BJ (cell line): ENCODE measurements at regions of chr21 and their contacts with region 1.

Region 1: DNA sequence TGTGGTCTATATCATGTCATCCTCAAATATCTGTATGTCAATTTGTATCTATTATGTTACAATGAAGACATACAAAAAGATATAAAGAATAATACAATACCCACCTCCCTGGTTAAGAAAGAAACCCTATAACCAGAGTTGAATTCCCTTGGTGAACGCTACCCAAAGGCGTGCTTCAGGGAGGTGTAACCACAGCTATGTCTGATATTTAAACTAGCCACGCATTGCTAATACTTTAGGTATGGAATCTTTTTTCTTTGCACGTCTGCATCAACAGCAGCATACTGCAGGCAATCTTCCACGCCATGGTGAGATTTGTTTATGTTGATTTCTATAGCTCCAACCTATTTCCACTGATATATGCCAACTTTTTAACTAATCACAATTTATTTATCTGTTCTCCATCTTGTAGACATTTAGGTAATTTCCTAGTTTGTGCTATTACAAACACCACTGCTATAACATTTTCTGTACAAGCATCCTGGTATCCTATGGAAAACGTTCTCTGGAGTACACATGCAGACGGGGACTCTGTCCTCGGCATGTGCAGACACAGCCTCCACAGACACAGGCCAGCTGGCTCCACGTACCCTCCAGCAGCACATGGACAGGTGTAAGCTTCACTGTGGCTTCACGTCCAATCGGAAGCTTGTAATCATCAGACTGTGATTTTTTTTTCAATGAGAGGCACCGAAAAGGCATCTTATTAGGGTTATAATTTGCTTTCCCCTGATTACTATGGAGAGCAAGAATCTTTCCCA is 58.5 kb downstream of the HSF2BP start:
- DNase-seq: peak; percentile 73
- H3K4me3 ChIP-seq: no peak overlapping the region
- H3K27me3 ChIP-seq: no peaks in the 10 kb centered on the region
- CTCF ChIP-seq: no peak

Region 2: DNA sequence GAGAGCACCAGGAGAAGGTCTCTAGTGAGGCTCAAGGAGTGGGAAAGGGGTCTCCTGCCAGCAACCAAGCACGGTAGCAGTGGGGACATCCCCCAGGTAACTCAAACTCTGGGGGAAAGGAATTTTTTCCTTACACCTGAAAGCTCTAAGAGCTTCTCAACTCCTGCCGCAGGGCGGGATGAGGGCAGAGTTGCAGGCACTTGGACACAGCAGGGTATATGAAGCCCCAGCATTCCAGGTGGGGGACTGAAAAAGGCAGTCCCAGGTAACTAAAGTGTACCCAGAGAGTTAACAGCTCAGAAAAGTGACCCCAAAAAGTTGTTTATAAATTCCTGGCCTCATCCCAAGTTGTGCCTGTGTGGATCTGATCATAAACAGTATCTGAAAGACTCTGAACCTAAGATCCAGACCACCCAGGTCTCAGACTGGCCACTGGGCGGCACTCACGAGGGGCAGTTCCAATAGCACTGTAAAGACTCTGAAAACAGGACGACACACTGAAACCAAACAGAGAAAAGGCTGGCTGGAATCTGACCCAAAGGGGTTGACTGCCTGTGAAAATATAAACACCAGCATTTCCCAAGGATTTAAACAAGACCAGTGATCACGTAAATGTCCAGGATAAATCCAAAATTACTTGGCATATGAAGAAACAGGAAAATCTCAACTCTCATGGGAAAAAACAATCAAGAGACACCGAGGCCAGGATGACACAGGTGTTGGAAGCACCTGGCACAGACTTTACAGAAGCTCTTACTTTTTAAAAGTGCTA is 11.0 kb after region 1 on chr21:
- CTCF ChIA-PET with region 1: interaction called, 10 read pairs
- POLR2A ChIA-PET with region 1: interaction called, 4 read pairs
- DNase-seq: no peak
- H3K4me3 ChIP-seq: no peak overlapping the region
- H3K27me3 ChIP-seq: no peaks in the 10 kb centered on the region
- CTCF ChIP-seq: peak; percentile 80

Region 3: DNA sequence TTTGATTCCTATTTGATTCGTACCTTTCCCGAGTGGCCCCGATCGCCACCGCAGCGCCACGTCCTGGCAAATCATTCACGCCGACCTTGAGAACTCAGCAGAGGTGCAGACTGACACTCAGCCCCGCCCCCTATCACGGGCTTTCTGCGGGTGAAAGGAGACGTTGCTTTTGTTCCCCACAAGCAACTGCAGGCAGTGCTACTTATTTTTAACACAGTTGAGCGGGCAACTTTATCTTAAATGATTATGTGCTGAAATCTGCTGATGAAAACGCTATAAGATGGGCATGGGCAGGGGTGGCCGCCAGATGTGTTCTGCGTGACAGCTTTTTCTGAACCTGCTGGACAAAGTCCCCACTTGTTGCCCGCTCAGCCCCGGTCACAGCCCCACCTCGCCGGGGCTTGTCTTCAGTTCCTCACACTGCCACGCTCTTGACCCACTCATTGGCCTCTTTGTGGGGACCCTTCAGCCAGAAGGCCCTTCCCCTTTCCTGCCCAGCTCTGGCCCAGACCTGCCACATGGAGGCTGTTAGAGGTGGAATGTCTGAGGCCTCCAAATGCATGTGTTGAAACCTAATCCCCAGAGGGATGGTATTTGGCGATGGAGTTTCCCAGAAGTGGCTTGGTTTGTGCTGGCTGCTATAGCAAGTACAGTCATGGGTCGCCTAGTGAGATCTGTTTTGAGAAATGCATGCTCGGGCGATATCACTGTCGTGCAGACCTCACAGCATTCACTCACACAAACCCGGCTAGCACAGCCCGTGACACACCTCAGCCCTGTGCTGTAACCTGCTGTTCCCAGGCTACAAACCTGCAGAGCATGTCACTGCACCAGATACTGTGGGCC is 102.4 kb after region 1 on chr21:
- CTCF ChIA-PET with region 1: no interaction called
- POLR2A ChIA-PET with region 1: no interaction called
- DNase-seq: peak; percentile 60
- H3K4me3 ChIP-seq: no peak overlapping the region
- H3K27me3 ChIP-seq: no peaks in the 10 kb centered on the region
- CTCF ChIP-seq: no peak